CD8-positive, alpha-beta memory T cell (primary cell): ENCODE measurements at regions of chr14 and their contacts with region 1.

Region 1: GRCh38 chr14:92612988-92613658 is 99.5 kb downstream of the RIN3 start:
- DNase-seq: peak; percentile 22 to 77 (median 45)
- H3K4me3 ChIP-seq: no peak overlapping the region
- H3K4me3 Mint-ChIP-seq: peak overlapping the region in 2 of 7 donors; percentile 2 to 10
- H3K27ac ChIP-seq: no peak overlapping the region
- H3K27ac Mint-ChIP-seq: peak overlapping the region; percentile 59 to 88 (median 70)
- H3K4me1 ChIP-seq: peaks cover 68% of the 10 kb centered on the region
- H3K4me1 Mint-ChIP-seq: peaks cover 56 to 82% (median 73%) of the 10 kb centered on the region in 3 donors
- H3K27me3 ChIP-seq: no peaks in the 10 kb centered on the region
- H3K27me3 Mint-ChIP-seq: no peaks in the 10 kb centered on the region

Region 2: GRCh38 chr14:92439537-92440344 is 173.4 kb before region 1 on chr14:
- CTCF ChIA-PET with region 1: no interaction called
- POLR2A ChIA-PET with region 1: no interaction called
- DNase-seq: no peak
- H3K4me3 ChIP-seq: no peak overlapping the region
- H3K4me3 Mint-ChIP-seq: no peak overlapping the region
- H3K27ac ChIP-seq: no peak overlapping the region
- H3K27ac Mint-ChIP-seq: no peak overlapping the region
- H3K4me1 ChIP-seq: peaks cover 12% of the 10 kb centered on the region
- H3K4me1 Mint-ChIP-seq: peaks cover 15 to 26% (median 19%) of the 10 kb centered on the region in 3 donors
- H3K27me3 ChIP-seq: no peaks in the 10 kb centered on the region
- H3K27me3 Mint-ChIP-seq: peaks cover 0 to 1% of the 10 kb centered on the region in 2 donors

Region 3: GRCh38 chr14:92527721-92528120 is 85.4 kb before region 1 on chr14:
- CTCF ChIA-PET with region 1: no interaction called
- POLR2A ChIA-PET with region 1: no interaction called
- DNase-seq: no peak
- H3K4me3 ChIP-seq: no peak overlapping the region
- H3K4me3 Mint-ChIP-seq: peak overlapping the region in 1 of 7 donors; percentile 58
- H3K27ac ChIP-seq: no peak overlapping the region
- H3K27ac Mint-ChIP-seq: peak overlapping the region; percentile 19 to 98 (median 90)
- H3K4me1 ChIP-seq: peaks cover 47% of the 10 kb centered on the region
- H3K4me1 Mint-ChIP-seq: peaks cover 58 to 83% (median 62%) of the 10 kb centered on the region in 3 donors
- H3K27me3 ChIP-seq: no peaks in the 10 kb centered on the region
- H3K27me3 Mint-ChIP-seq: no peaks in the 10 kb centered on the region

Region 4: DNA sequence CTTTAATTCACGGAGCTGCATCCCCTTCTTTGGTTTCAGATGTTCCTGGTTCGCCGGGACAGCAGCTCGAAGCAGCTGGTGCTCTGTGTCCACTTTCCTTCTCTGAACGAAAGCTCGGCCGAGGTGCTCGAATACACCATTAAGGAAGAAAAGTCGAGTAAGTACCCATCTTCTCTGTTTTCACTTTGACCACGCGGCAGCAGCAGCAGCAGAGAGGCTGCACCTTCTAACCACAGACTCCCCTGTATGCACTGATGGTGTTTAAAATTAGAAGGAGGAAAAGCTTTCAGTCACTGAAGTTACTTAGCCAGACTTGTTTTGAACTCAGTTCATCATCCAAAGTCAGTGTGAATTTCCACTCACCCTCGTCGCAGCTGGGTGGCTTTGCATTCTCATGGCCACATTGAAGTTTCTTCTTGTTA is 35.8 kb before region 1 on chr14:
- CTCF ChIA-PET with region 1: interaction called, 12 read pairs
- POLR2A ChIA-PET with region 1: no interaction called
- DNase-seq: peak in 3 of 5 donors; percentile 38 to 61 (median 43)
- H3K4me3 ChIP-seq: peak overlapping the region; percentile 57
- H3K4me3 Mint-ChIP-seq: peak overlapping the region; percentile 65 to 92 (median 88)
- H3K27ac ChIP-seq: no peak overlapping the region
- H3K27ac Mint-ChIP-seq: peak overlapping the region; percentile 65 to 97 (median 93)
- H3K4me1 ChIP-seq: peaks cover 59% of the 10 kb centered on the region
- H3K4me1 Mint-ChIP-seq: peaks cover 73 to 86% (median 74%) of the 10 kb centered on the region in 3 donors
- H3K27me3 ChIP-seq: no peaks in the 10 kb centered on the region
- H3K27me3 Mint-ChIP-seq: no peaks in the 10 kb centered on the region

Region 5: GRCh38 chr14:92625213-92625612 is 12.1 kb after region 1 on chr14:
- CTCF ChIA-PET with region 1: interaction called, 10 read pairs
- POLR2A ChIA-PET with region 1: no interaction called
- DNase-seq: no peak
- H3K4me3 ChIP-seq: no peak overlapping the region
- H3K4me3 Mint-ChIP-seq: no peak overlapping the region
- H3K27ac ChIP-seq: no peak overlapping the region
- H3K27ac Mint-ChIP-seq: peak overlapping the region in 1 of 8 donors; percentile 4
- H3K4me1 ChIP-seq: no peaks in the 10 kb centered on the region
- H3K4me1 Mint-ChIP-seq: peaks cover 4 to 17% (median 4%) of the 10 kb centered on the region in 3 donors
- H3K27me3 ChIP-seq: no peaks in the 10 kb centered on the region
- H3K27me3 Mint-ChIP-seq: no peaks in the 10 kb centered on the region

Region 6: DNA sequence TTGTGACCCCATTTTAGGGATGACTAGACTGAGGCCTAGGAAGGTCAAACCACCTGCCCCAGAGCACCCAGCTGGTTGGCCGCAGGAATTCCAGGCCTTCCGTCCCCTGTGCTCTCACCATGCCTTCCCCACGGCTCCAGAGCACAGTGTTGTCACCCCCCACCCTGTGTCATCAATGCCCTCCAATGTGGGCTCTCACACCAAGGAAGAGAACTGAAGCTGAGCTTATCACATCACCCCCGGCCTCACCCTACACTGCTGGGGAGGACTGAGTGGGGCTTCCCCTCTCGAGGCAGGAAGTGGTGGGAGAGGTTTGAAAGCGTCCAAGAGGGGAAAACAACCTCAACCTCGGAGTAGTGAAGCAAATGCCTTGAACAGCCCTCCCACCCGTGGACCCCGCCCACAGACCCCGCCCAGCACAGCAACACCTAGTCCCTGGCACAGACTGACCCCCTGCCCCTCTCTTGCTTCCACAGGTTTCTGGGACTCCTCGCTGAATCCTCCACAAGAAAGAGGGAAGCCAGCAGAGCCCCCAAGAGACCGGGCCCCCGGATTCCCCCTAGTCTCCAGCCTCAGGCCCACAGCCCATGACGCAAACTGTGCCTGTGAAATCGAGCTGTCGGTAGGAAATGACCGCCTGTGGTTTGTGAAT is 38.1 kb after region 1 on chr14:
- CTCF ChIA-PET with region 1: interaction called, 58 read pairs
- POLR2A ChIA-PET with region 1: interaction called, 21 read pairs
- DNase-seq: peak; percentile 61 to 91 (median 85)
- H3K4me3 ChIP-seq: peak overlapping the region; percentile 63
- H3K4me3 Mint-ChIP-seq: peak overlapping the region; percentile 72 to 95 (median 89)
- H3K27ac ChIP-seq: peak overlapping the region; percentile 66
- H3K27ac Mint-ChIP-seq: peak overlapping the region; percentile 92 to 100 (median 98)
- H3K4me1 ChIP-seq: peaks cover 64% of the 10 kb centered on the region
- H3K4me1 Mint-ChIP-seq: peaks cover 82 to 98% (median 83%) of the 10 kb centered on the region in 3 donors
- H3K27me3 ChIP-seq: no peaks in the 10 kb centered on the region
- H3K27me3 Mint-ChIP-seq: peaks cover 0 to 3% of the 10 kb centered on the region in 2 donors

Region 7: GRCh38 chr14:92680781-92681650 is 67.9 kb after region 1 on chr14:
- CTCF ChIA-PET with region 1: interaction called, 35 read pairs
- POLR2A ChIA-PET with region 1: no interaction called
- DNase-seq: peak; percentile 54 to 82 (median 66)
- H3K4me3 ChIP-seq: no peak overlapping the region
- H3K4me3 Mint-ChIP-seq: peak overlapping the region in 3 of 7 donors; percentile 16 to 50 (median 48)
- H3K27ac ChIP-seq: no peak overlapping the region
- H3K27ac Mint-ChIP-seq: peak overlapping the region; percentile 81 to 97 (median 90)
- H3K4me1 ChIP-seq: peaks cover 28% of the 10 kb centered on the region
- H3K4me1 Mint-ChIP-seq: peaks cover 24 to 32% (median 24%) of the 10 kb centered on the region in 3 donors
- H3K27me3 ChIP-seq: no peaks in the 10 kb centered on the region
- H3K27me3 Mint-ChIP-seq: peaks cover 0 to 2% of the 10 kb centered on the region in 2 donors

Region 8: DNA sequence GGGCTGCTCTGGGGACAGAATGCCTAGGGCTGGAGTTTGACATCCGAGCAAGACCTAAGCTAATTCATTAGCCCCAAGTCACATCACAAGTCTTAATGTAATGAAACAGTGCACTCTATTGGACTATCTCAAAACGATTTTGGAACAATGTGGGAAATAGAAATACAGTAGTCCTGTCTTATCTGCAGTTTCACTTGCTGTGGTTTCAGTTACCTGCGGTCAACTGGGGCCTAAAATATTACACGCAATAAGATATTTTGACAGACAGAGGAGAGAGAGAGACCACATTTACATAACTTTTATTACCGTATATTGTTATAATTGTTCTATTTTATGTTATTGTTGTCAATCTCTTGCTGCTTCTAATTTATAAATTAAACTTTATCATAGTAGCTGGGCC is 550.4 kb after region 1 on chr14:
- CTCF ChIA-PET with region 1: no interaction called
- POLR2A ChIA-PET with region 1: no interaction called
- DNase-seq: no peak
- H3K4me3 ChIP-seq: no peak overlapping the region
- H3K4me3 Mint-ChIP-seq: no peak overlapping the region
- H3K27ac ChIP-seq: no peak overlapping the region
- H3K27ac Mint-ChIP-seq: no peak overlapping the region
- H3K4me1 ChIP-seq: no peaks in the 10 kb centered on the region
- H3K4me1 Mint-ChIP-seq: no peaks in the 10 kb centered on the region
- H3K27me3 ChIP-seq: no peaks in the 10 kb centered on the region
- H3K27me3 Mint-ChIP-seq: no peaks in the 10 kb centered on the region